ENCODE measurements at regions of chr14 and their contacts with region 1.

Region 1: DNA sequence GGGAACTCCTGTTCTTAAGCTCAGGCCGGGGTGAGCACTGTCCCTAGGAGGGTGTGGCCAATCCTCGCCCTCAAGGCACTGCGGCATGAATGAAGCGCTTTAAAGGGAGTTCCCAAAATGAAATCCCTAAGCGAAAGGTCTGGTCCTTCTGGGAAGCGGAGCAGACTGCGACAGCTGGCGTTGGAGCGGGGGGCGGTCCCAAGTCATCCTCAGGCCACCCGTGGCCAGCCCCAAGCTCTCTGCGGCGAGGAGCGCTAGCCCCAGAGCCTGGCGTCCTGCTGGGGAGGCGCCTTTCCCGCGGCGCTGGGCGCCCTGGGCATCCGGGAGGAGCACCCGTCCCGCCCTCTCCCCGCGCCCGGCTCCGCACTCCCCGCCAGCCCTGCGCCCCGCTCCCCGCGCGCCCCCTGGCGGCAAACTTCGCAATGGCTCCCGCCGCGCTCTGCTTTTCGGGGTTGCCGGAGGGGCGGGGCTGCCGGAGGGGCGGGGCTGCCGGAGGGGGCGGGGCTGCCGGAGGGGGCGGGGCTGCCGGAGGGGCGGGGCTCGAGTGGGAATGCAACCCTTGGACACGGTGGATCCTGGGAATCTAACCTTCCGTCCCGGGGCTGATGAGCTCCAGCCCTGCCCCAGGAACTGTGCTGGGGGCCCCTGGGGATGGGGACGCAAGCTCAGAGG is 25.4 kb downstream of the ZBTB42 start:
- DNase-seq: peak; percentile 92
- H3K4me3 Mint-ChIP-seq: peak overlapping the region; percentile 57
- H3K27ac Mint-ChIP-seq: no peak overlapping the region
- H3K4me1 Mint-ChIP-seq: peaks cover 15% of the 10 kb centered on the region
- H3K27me3 Mint-ChIP-seq: peaks cover 35% of the 10 kb centered on the region

Region 2: GRCh38 chr14:104677512-104678332 is 148.6 kb before region 1 on chr14:
- intact Hi-C with region 1: loop called (anchors 1 kb)
- DNase-seq: peak; percentile 69
- H3K4me3 Mint-ChIP-seq: peak overlapping the region; percentile 73
- H3K27ac Mint-ChIP-seq: peak overlapping the region; percentile 90
- H3K4me1 Mint-ChIP-seq: peaks cover 22% of the 10 kb centered on the region
- H3K27me3 Mint-ChIP-seq: peaks cover 5% of the 10 kb centered on the region

Region 3: GRCh38 chr14:104723648-104724406 is 102.5 kb before region 1 on chr14 and contains the start of gene ADSS1:
- intact Hi-C with region 1: loop called (anchors 1 kb)
- DNase-seq: peak; percentile 50
- H3K4me3 Mint-ChIP-seq: peak within 1 kb of the TSS; percentile 59
- H3K27ac Mint-ChIP-seq: no peak within 1 kb of the TSS
- H3K4me1 Mint-ChIP-seq: no peaks in the 10 kb centered on the region
- H3K27me3 Mint-ChIP-seq: no peaks in the 10 kb centered on the region
- total RNA-seq, gene ADSS1: 1.1 and 1.2 TPM in 2 replicates

Region 4: GRCh38 chr14:104757681-104758392 is 68.5 kb before region 1 on chr14:
- intact Hi-C with region 1: no loop called
- DNase-seq: no peak
- H3K4me3 Mint-ChIP-seq: no peak overlapping the region
- H3K27ac Mint-ChIP-seq: no peak overlapping the region
- H3K4me1 Mint-ChIP-seq: peaks cover 21% of the 10 kb centered on the region
- H3K27me3 Mint-ChIP-seq: no peaks in the 10 kb centered on the region

Region 5: DNA sequence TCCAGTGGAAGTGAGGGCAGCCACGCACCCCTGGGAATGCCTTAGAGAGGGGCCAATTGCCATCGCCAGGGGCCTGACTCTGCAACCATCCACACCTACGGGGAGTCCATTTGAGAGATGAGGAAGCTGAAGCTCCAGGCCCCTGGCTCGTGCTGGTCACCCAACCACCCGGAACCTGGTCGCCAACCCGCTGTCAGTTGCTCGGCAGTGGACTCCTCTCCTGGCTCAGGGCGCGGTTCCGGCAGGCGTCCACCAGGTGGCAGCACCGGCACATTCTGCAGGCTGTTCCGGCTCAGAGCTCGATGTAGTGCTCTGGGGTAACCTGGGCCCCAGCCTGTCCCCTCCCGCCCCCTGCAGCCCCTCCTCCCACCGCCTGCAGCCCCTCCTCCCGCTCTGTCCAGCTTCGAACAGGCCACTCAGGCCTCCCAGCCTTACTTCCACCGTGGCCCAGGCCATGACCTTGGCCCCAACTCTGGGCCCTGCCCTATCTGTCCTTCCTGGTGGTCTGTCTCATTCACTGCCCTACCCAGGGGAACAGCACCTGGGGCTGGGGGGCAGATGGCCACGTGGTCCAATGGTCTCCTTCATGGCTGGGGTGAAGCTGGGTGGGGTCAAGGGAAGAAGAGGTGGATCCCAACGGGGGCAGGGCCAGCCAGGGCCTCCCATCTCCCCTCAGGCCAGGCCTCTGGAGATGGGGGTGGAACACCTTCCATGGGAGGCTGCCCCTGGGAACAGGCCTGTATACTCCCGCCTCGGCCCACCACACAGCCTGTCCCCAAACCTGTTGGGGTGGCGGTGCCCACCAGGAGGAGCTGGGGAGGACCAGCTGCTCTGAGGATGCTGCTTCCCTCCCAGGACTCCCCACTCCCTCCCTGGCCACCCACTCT is 57.6 kb before region 1 on chr14:
- intact Hi-C with region 1: loop called (anchors 1 kb)
- DNase-seq: peak; percentile 86
- H3K4me3 Mint-ChIP-seq: no peak overlapping the region
- H3K27ac Mint-ChIP-seq: no peak overlapping the region
- H3K4me1 Mint-ChIP-seq: no peaks in the 10 kb centered on the region
- H3K27me3 Mint-ChIP-seq: no peaks in the 10 kb centered on the region

Region 6: DNA sequence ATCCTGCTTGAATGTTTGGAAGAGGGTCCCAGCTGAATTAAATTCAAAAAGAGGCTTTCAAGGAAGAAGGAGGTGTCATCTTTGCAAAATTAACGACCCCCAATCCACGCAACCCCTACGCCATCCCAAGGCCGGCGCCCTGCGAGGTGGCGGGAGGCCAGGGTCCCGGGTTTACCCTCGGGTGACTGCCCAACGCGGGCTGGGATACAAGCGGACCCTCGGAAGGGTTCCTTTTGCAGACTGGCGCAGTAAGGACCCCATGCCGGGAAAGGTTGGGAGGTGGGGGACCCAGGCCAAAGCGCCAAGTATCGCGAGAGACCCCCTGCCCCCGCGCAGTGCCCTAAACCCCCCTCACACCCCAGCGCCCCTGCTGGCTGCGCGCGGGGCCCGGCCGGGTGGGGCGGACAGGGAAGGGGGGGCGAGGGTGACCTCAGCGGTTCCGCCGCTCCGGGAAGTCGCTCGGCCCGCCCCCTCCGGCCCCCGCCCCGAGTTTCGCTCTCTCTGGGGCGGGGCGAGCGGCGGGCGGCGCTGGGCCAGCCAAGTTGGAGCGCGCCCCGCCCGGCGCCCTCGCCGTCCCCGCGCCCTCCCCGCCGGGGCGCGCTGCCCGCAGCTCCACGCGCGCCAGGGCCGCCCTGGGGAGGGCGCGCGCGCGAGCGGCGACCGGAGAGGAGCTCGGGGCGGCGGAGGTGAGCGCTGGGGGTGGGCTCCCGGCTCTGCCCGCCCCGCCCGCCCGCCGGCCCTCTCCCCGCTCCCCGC is 26.1 kb before region 1 on chr14:
- intact Hi-C with region 1: loop called (anchors 1 kb)
- DNase-seq: peak; percentile 77
- H3K4me3 Mint-ChIP-seq: peak overlapping the region; percentile 61
- H3K27ac Mint-ChIP-seq: peak overlapping the region; percentile 66
- H3K4me1 Mint-ChIP-seq: peaks cover 16% of the 10 kb centered on the region
- H3K27me3 Mint-ChIP-seq: peaks cover 10% of the 10 kb centered on the region

Region 7: GRCh38 chr14:104865644-104866441 is 39.5 kb after region 1 on chr14:
- intact Hi-C with region 1: loop called (anchors 2 kb)
- DNase-seq: no peak
- H3K4me3 Mint-ChIP-seq: peak overlapping the region; percentile 70
- H3K27ac Mint-ChIP-seq: no peak overlapping the region
- H3K4me1 Mint-ChIP-seq: peaks cover 7% of the 10 kb centered on the region
- H3K27me3 Mint-ChIP-seq: peaks cover 12% of the 10 kb centered on the region

Region 8: DNA sequence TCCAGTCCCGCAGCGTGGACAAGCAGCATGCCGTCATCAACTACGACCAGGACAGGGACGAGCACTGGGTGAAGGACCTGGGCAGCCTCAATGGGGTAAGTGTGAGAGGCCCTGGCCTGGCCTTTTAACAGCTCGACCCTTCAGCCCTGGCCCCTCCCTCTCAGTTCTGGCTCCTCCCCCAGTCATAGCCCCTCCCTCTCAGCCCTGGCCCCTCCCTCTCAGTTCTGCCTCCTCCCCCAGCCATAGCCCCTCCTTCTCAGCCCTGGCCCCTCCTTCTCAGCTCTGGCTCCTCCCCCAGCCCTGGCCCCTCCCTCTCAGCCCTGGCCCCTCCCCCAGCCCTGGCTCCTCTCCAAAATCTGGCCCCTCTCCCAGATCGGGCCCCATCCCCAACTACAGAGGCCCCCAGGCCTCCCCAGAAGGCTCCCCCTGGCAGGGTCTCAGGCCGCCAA is 50.0 kb after region 1 on chr14:
- intact Hi-C with region 1: loop called (anchors 1 kb)
- DNase-seq: peak; percentile 21
- H3K4me3 Mint-ChIP-seq: no peak overlapping the region
- H3K27ac Mint-ChIP-seq: no peak overlapping the region
- H3K4me1 Mint-ChIP-seq: peaks cover 7% of the 10 kb centered on the region
- H3K27me3 Mint-ChIP-seq: no peaks in the 10 kb centered on the region

Region 9: GRCh38 chr14:105470804-105471610 is 644.7 kb after region 1 on chr14:
- intact Hi-C with region 1: no loop called
- DNase-seq: no peak
- H3K4me3 Mint-ChIP-seq: no peak overlapping the region
- H3K27ac Mint-ChIP-seq: no peak overlapping the region
- H3K4me1 Mint-ChIP-seq: no peaks in the 10 kb centered on the region
- H3K27me3 Mint-ChIP-seq: no peaks in the 10 kb centered on the region

Measured in activated T-helper 1 cell treated with anti-CD3 and anti-CD28 coated beads, Interleukin-12 subunit alpha, Interleukin-12 subunit beta, Interleukin-2, Interleukin-4 antibody, amounts not matched to agents 30 ng/mL and 10 ng/mL and 1 ng/mL, durations not matched to agents 14 hours and 24 hours and 36 hours (primary cell).